ENCODE measurements at regions of chr1 and their contacts with region 1.

Region 1: GRCh38 chr1:235011599-235012435 is 116.8 kb downstream of the TOMM20 start:
- DNase-seq: peak; percentile 98
- H3K4me3 Mint-ChIP-seq: peak overlapping the region; percentile 76
- H3K27ac Mint-ChIP-seq: peak overlapping the region; percentile 98
- H3K4me1 Mint-ChIP-seq: peaks cover 79% of the 10 kb centered on the region
- H3K27me3 Mint-ChIP-seq: peaks cover 5% of the 10 kb centered on the region

Region 2: DNA sequence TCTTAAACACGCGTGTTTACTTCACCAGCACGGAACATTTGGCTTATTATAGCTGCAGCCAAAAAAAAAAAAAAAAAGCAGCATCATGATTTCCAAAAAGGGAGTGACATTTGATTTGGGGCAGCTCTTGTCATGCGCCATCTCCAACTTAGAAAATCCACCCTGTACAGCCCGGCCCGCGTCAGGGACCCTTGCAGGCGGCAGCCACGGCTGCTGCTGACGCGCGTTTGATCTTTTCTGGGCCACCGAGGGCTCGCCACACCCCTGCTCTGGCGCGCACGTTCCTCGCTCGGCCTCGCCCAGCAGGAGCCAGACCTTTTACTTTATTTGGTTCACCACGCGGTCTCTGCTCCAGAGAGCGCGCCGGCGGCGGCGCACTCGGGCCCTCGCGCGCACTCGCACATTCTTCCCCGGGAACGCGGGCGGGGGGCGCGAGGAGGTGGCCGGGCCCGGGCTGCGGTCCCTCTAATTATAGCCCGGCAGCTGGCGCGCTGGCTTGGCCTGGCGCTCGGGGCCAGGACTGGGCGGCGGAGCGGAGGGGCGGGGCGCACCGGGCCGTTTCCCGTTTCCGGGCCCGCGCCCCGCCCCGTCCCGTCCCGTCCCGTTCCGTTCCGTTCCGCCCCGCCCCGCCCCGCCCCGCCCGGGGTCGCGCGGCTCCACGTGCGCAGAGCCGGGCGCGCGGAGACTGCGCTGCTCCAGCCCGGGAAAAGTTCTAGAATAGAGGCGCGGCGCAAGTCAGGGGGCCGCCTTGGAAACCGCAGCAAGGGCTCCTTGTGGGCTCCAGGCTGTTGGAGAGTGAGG is 412.0 kb before region 1 on chr1:
- intact Hi-C with region 1: loop called (anchors 2 kb)
- DNase-seq: peak; percentile 92
- H3K4me3 Mint-ChIP-seq: peak overlapping the region; percentile 89
- H3K27ac Mint-ChIP-seq: peak overlapping the region; percentile 97
- H3K4me1 Mint-ChIP-seq: peaks cover 47% of the 10 kb centered on the region
- H3K27me3 Mint-ChIP-seq: no peaks in the 10 kb centered on the region

Region 3: DNA sequence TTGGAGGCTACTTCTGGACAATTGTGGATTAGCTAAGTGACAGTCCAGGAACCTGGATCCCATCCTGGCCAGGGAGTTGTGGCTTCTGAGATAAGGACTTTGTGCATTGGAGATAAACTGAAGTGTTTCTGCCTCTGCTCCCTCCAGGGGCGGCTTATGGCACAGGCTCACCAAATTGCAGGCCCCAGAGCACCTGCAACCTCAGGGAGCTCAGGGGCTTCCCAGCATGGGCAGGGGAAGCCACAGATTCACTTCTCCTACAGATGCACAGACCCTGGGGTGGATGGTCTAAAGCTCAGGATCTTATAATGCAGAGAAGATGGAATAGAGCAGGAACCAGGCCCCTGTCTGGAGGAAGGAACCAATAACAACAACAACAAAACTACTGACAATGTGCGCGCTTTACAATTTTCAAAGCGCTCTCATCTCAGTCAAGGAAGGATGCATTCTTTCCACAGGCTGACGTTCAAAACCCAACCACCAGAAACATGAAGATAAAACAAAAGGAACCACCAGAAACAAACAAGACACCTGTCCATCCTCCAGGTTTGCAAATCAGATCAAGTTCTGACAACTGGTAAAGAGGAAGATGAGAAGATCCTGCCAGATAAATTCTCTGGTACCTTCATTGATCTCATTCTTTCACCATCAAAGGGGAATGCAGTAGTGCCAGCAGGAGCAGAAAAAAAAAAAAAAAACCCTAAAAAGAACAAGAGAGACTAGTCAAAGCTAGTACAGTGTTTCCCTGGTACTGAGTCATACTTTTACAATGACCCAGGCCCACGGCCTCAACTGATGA is 280.8 kb before region 1 on chr1:
- intact Hi-C with region 1: loop called (anchors 1 kb)
- DNase-seq: peak; percentile 86
- H3K4me3 Mint-ChIP-seq: peak overlapping the region; percentile 68
- H3K27ac Mint-ChIP-seq: peak overlapping the region; percentile 96
- H3K4me1 Mint-ChIP-seq: peaks cover 77% of the 10 kb centered on the region
- H3K27me3 Mint-ChIP-seq: no peaks in the 10 kb centered on the region

Region 4: DNA sequence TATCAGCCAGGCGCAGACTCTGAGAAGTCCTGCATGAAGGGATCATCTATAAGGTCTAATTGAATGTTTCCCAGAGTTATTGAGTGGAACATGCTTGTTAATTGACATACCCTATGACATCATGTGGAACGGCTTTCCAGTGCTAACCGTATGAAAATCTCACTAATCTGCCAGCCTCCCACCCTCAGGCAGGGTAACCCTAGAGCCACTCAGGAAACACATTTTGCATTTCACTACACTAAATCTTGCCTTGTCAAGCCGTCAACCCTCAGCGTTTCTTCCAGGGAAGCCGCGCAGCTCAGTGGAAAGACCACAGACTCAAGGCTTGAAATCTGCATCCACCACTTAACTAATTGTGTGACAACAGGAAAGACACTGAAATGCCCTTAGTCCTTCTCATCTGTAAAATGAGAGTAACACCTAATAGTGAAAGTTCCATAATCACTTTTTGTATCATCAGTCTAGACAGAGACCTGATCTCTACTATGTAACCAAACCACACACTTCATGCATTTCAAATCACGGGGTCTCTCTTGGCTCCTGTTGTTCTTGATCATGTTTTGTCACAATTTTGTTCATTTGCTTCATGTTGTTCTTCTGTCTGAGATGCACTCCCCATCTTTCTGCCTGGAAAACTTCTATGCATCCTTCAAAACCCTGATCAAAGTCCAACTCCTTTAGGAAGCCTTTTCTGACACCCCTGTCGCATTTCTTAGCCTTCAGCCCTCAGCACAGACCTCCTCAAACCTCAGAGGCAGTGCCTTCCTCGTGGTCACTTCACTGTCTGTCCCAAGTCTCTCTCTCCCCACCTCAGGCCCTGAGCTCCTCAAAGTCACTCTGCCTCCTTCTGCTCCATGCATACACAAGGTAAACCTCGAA is 129.7 kb before region 1 on chr1:
- intact Hi-C with region 1: loop called (anchors 1 kb)
- DNase-seq: peak; percentile 69
- H3K4me3 Mint-ChIP-seq: no peak overlapping the region
- H3K27ac Mint-ChIP-seq: peak overlapping the region; percentile 77
- H3K4me1 Mint-ChIP-seq: peaks cover 51% of the 10 kb centered on the region
- H3K27me3 Mint-ChIP-seq: no peaks in the 10 kb centered on the region

Region 5: GRCh38 chr1:234970731-234971476 is 40.9 kb before region 1 on chr1:
- intact Hi-C with region 1: loop called (anchors 2 kb)
- DNase-seq: peak; percentile 77
- H3K4me3 Mint-ChIP-seq: peak overlapping the region; percentile 63
- H3K27ac Mint-ChIP-seq: peak overlapping the region; percentile 79
- H3K4me1 Mint-ChIP-seq: peaks cover 62% of the 10 kb centered on the region
- H3K27me3 Mint-ChIP-seq: no peaks in the 10 kb centered on the region

Region 6: DNA sequence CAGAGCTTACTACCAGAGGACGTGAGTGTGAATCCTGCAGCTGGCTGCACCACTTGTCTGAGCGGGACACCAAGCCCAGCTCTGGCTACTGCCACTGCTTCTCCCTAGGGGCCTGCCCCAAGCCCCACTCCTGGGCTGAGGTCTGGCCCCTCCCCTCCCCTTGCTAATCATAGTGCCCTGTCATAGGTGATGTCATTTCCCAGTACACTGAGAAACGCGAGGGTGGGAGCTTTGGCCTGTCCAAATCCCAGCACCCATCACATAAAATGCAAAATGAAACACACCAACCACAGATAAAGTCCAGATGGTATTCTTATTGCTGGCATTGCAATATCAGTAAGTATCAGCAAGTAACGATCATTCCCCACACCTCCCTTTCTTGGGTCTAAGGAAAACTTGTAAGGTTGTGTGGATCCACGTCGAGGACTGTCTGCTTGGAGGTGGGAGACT is 39.1 kb after region 1 on chr1:
- intact Hi-C with region 1: loop called (anchors 1 kb)
- DNase-seq: no peak
- H3K4me3 Mint-ChIP-seq: no peak overlapping the region
- H3K27ac Mint-ChIP-seq: peak overlapping the region; percentile 66
- H3K4me1 Mint-ChIP-seq: peaks cover 44% of the 10 kb centered on the region
- H3K27me3 Mint-ChIP-seq: no peaks in the 10 kb centered on the region